ENCODE measurements at regions of chr11 and their contacts with region 1.

Region 1: GRCh38 chr11:134223836-134224709 is at the starts of genes NCAPD3 and VPS26B:
- DNase-seq: peak; percentile 98
- ATAC-seq: peak; percentile 98
- total RNA-seq, gene NCAPD3: 14.2 TPM
- total RNA-seq, gene VPS26B: 39.1 TPM

Region 2: DNA sequence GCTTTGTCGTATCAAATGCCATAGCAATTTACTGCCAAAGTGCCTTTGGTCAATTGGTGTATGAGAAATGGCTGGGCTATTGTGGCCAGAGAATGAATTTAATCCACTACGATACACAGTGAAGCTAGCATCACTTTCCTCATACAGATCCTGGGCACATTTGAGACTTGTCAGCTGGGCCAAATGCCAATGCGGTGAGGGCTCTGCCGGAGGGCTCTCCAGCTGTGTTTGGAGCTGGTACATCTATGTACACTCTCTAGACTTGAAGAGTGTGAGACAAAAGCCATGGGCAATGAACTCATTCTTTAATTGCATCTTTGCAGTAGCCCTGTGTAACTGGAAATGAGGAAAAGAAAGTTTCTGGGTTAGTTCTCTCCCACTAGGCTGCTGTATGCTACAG is 1800.8 kb before region 1 on chr11:
- intact Hi-C with region 1: loop called (anchors 5 kb)
- DNase-seq: no peak
- ATAC-seq: no peak